ENCODE measurements at regions of chr7 and their contacts with region 1.

Region 1: GRCh38 chr7:25851332-25852210 is 300.4 kb upstream of the NFE2L3 start:
- DNase-seq: peak; percentile 63
- H3K4me3 Mint-ChIP-seq: peak overlapping the region; percentile 78
- H3K27ac Mint-ChIP-seq: peak overlapping the region; percentile 74
- H3K4me1 Mint-ChIP-seq: peaks cover 21% of the 10 kb centered on the region
- H3K27me3 Mint-ChIP-seq: peaks cover 43% of the 10 kb centered on the region

Region 2: GRCh38 chr7:25259587-25260243 is 591.9 kb before region 1 on chr7:
- intact Hi-C with region 1: loop called (anchors 1 kb)
- DNase-seq: peak; percentile 45
- H3K4me3 Mint-ChIP-seq: no peak overlapping the region
- H3K27ac Mint-ChIP-seq: no peak overlapping the region
- H3K4me1 Mint-ChIP-seq: peaks cover 26% of the 10 kb centered on the region
- H3K27me3 Mint-ChIP-seq: peaks cover 17% of the 10 kb centered on the region

Region 3: DNA sequence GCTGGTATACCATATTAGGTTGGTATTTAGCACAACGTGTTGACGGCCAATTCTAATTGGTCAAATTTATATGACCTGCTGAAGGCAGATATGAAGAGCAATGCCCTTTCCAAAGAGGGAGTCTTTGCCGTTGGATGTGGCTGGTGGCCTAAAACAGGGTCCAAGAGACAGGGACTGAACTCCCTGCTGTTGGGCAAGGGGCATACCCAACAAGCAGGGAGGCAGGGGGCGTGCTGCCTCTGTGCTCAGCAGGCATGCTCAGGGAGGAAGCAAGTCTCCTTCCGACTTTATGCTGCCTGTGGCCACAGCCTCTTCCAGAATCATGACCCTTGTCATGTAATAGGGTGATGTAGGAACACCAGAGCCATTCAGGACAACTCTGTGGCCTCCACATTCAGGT is 455.6 kb before region 1 on chr7:
- intact Hi-C with region 1: loop called (anchors 5 kb)
- DNase-seq: no peak
- H3K4me3 Mint-ChIP-seq: no peak overlapping the region
- H3K27ac Mint-ChIP-seq: no peak overlapping the region
- H3K4me1 Mint-ChIP-seq: no peaks in the 10 kb centered on the region
- H3K27me3 Mint-ChIP-seq: peaks cover 9% of the 10 kb centered on the region

Region 4: DNA sequence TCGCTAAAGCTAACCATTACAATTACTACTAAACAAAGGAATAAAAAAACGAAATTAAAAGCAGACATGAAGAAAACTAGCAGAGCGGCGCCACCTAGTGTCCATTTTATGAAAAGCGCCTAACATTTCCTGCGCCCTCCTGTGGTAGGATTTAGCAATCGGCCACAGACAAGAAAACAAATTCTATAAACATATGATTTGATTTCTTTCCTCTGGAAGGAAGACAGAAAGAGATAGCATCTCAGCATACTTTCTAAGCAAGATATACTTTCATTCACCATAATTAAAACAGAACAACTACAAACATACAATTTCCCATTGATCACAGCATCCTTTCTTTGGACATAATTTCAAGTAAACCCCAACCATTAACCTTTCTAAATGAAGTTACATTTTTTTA is 285.6 kb before region 1 on chr7:
- intact Hi-C with region 1: loop called (anchors 1 kb)
- DNase-seq: peak; percentile 53
- H3K4me3 Mint-ChIP-seq: no peak overlapping the region
- H3K27ac Mint-ChIP-seq: no peak overlapping the region
- H3K4me1 Mint-ChIP-seq: peaks cover 5% of the 10 kb centered on the region
- H3K27me3 Mint-ChIP-seq: peaks cover 6% of the 10 kb centered on the region

Region 5: DNA sequence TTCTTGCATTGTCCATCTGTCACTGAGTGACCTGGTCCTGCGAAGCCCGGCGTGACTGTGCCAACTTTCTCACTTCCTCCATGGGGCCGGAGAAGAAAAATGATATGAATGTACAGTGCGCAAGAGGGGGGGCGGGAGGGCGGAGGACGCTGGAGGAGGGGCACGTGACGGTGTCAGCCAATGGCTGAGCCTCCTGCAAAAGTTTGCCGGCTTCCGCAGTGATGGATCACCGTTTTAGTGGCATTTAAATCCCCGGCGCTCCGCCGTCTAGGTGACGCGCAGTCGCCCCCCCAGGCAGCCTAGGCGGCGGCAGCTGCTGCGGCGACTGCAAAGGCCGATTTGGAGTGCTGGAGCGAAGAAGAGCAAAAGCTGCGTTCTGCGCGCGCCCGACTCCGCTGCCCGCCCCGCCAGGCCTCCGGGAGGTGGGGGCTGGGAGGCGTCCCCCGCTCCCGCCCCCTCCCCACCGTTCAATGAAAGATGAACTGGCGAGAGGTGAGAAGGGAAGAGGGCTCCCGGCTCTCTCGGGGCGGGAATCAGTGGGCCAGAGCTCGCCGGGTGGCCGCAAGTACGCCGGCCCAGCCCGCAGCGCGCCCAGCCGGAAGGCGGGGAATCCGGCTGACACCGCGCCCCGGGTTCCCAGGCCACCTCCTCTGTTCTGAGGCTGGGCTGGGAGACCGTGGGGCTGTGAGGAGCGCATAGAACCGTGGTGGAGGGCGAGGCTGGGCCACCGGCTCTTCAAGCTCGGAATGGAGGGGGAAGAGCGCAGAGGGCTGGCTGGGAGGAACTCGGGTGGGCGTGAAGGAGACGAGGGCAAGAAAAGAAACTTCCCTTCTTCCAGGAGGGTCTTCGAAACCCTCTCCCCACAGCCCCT is 1244.6 kb after region 1 on chr7 and contains the start of gene HOXA1:
- intact Hi-C with region 1: loop called (anchors 5 kb)
- DNase-seq: peak; percentile 66
- H3K4me3 Mint-ChIP-seq: peak within 1 kb of the TSS; percentile 80
- H3K27ac Mint-ChIP-seq: peak within 1 kb of the TSS; percentile 21
- H3K4me1 Mint-ChIP-seq: peaks cover 16% of the 10 kb centered on the region
- H3K27me3 Mint-ChIP-seq: peaks cover 83% of the 10 kb centered on the region
- total RNA-seq, gene HOXA1: 0.11 and 0.16 TPM in 2 replicates

Measured in activated T-helper 2 cell treated with anti-CD3 and anti-CD28 coated beads, Interferon-gamma antibody, Interleukin-2, Interleukin-4, amounts not matched to agents 10 μg/mL and 5 μg/mL and 100 μg/mL, durations not matched to agents 14 hours and 24 hours and 36 hours (primary cell).